T-cell (primary cell): ENCODE measurements at regions of chr18 and their contacts with region 1.

Region 1: DNA sequence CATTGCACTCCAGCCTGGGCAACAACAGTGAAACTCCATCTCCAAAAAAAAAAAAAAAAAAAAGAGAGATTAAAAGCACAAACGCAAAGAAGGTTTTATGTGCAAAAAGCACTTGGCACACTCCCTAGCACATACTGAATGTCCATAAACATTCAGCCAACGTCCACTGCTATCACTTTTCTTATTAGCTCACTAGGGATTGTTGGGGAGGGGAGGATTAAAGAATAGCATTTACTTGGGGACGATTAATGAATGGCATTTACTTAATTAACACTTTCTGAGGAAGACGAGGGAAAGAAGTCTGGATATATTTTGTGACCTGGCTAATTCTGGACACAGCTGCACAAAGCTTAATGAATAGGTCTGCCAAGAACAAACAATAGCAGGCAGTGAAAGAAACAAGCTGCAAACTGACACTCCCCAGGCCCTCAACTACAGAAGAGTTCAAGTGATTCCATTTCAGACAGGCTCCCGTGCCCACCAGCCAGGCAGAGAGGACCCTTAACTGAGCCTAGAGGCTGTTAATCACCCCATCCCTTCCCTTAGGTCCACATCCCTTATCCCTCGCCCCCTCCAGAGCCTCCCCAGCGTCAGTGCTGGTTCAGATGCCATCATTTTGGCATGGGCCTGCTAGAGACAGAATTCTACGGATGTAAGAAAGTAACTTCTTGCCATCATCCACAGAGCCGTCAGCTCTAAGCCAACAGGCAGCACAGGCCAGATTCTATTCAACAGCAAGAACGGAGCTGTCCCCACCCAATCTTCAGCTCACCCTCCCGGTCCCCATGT is 7.4 kb downstream of the CYB5A start:
- DNase-seq: no peak
- ATAC-seq: no peak
- H3K4me3 ChIP-seq: no peak overlapping the region
- H3K4me3 Mint-ChIP-seq: no peak overlapping the region
- H3K27ac ChIP-seq: no peak overlapping the region
- H3K27ac Mint-ChIP-seq: no peak overlapping the region
- H3K4me1 ChIP-seq: peaks cover 0 to 13% of the 10 kb centered on the region in 2 experiments
- H3K4me1 Mint-ChIP-seq: peaks cover 26 to 36% (median 33%) of the 10 kb centered on the region in 3 donors
- H3K27me3 ChIP-seq: no peaks in the 10 kb centered on the region
- H3K27me3 Mint-ChIP-seq: no peaks in the 10 kb centered on the region

Region 2: GRCh38 chr18:74299746-74300145 is 15.4 kb after region 1 on chr18:
- CTCF ChIA-PET with region 1: no interaction called
- POLR2A ChIA-PET with region 1: no interaction called
- DNase-seq: no peak
- ATAC-seq: no peak
- H3K4me3 ChIP-seq: no peak overlapping the region
- H3K4me3 Mint-ChIP-seq: no peak overlapping the region
- H3K27ac ChIP-seq: no peak overlapping the region
- H3K27ac Mint-ChIP-seq: no peak overlapping the region
- H3K4me1 ChIP-seq: no peaks in the 10 kb centered on the region
- H3K4me1 Mint-ChIP-seq: no peaks in the 10 kb centered on the region
- H3K27me3 ChIP-seq: no peaks in the 10 kb centered on the region
- H3K27me3 Mint-ChIP-seq: peaks cover 8 to 22% of the 10 kb centered on the region in 2 donors

Region 3: GRCh38 chr18:74444104-74444503 is 159.7 kb after region 1 on chr18:
- CTCF ChIA-PET with region 1: interaction called in 1 of 2 experiments, 27 read pairs
- POLR2A ChIA-PET with region 1: no interaction called
- DNase-seq: no peak
- ATAC-seq: no peak
- H3K4me3 ChIP-seq: no peak overlapping the region
- H3K4me3 Mint-ChIP-seq: no peak overlapping the region
- H3K27ac ChIP-seq: no peak overlapping the region
- H3K27ac Mint-ChIP-seq: no peak overlapping the region
- H3K4me1 ChIP-seq: no peaks in the 10 kb centered on the region
- H3K4me1 Mint-ChIP-seq: peaks cover 0 to 5% (median 0%) of the 10 kb centered on the region in 3 donors
- H3K27me3 ChIP-seq: peaks cover 0 to 27% of the 10 kb centered on the region in 2 experiments
- H3K27me3 Mint-ChIP-seq: peaks cover 0 to 4% of the 10 kb centered on the region in 2 donors